ENCODE measurements at regions of chr21 and their contacts with region 1.

Region 1: GRCh38 chr21:25568246-25568645 is 39.0 kb downstream of the MRPL39 start:
- DNase-seq: peak; percentile 54
- ATAC-seq: peak; percentile 22
- H3K4me3 ChIP-seq: no peak overlapping the region
- H3K4me3 Mint-ChIP-seq: peak overlapping the region; percentile 61
- H3K27ac ChIP-seq: peak overlapping the region; percentile 33 to 65
- H3K27ac Mint-ChIP-seq: peak overlapping the region; percentile 81
- H3K4me1 ChIP-seq: peaks cover 50 to 61% of the 10 kb centered on the region in 2 donors
- H3K4me1 Mint-ChIP-seq: peaks cover 86% of the 10 kb centered on the region
- H3K27me3 ChIP-seq: no peaks in the 10 kb centered on the region
- H3K27me3 Mint-ChIP-seq: no peaks in the 10 kb centered on the region
- CTCF ChIP-seq: no peak

Region 2: DNA sequence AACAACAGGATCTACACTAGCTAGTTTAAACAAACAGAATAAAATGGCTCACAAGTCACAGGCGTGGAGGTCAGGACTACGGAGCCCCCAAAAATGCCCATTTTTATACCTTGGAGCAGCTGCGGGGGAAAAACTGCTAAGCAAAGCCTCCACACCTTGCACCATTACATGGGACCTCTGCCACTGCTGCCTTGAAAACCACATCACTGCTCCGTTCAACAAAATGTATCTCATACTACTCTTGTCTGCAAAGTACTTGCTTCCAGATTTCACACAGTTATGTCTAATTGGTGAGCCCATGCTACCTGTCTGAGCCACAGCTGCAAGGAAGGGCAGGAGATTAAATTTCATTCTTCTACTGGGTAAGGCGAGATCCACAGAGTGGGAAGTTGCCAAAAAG is 14.6 kb after region 1 on chr21:
- CTCF ChIA-PET with region 1: interaction called, 3 read pairs
- POLR2A ChIA-PET with region 1: no interaction called
- intact Hi-C with region 1: loop called (anchors 2 kb)
- DNase-seq: no peak
- ATAC-seq: no peak
- H3K4me3 ChIP-seq: no peak overlapping the region
- H3K4me3 Mint-ChIP-seq: no peak overlapping the region
- H3K27ac ChIP-seq: peak overlapping the region in 1 of 2 donors; percentile 65
- H3K27ac Mint-ChIP-seq: peak overlapping the region; percentile 2
- H3K4me1 ChIP-seq: peaks cover 0 to 7% of the 10 kb centered on the region in 2 donors
- H3K4me1 Mint-ChIP-seq: peaks cover 20% of the 10 kb centered on the region
- H3K27me3 ChIP-seq: no peaks in the 10 kb centered on the region
- H3K27me3 Mint-ChIP-seq: no peaks in the 10 kb centered on the region
- CTCF ChIP-seq: no peak

Measured in B cell (primary cell).